Caco-2 (cell line): ENCODE measurements at regions of chr12 and their contacts with region 1.

Region 1: GRCh38 chr12:28998637-28999120 is 150.4 kb upstream of the FAR2 start:
- DNase-seq: peak in 1 of 2 experiments; percentile 30
- H3K4me3 ChIP-seq: no peak overlapping the region
- H3K4me3 Mint-ChIP-seq: no peak overlapping the region
- H3K27ac Mint-ChIP-seq: no peak overlapping the region
- H3K4me1 ChIP-seq: no peaks in the 10 kb centered on the region
- H3K4me1 Mint-ChIP-seq: no peaks in the 10 kb centered on the region
- H3K27me3 ChIP-seq: no peaks in the 10 kb centered on the region
- H3K27me3 Mint-ChIP-seq: no peaks in the 10 kb centered on the region
- CTCF ChIP-seq: peak; percentile 46 to 52

Region 2: DNA sequence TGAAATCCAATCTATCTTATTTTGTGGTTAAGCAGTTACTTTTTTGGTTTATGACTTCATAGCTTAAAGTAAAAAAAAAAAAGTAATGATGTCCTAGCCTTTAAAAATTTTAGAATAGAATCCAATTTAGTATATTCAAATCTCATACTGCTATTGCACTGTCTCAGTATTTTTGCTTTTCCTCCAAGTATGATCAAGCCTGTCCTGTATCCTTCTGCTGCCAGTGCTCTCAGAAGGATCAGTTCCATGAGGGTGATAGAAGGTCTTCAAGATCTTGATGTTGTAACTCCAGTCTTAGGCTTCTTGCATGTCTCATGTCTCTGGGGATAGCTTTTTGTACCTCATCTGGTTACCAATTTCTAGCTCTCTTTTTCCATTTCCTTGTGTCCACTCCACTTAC is 173.8 kb before region 1 on chr12:
- CTCF ChIA-PET with region 1: no interaction called
- POLR2A ChIA-PET with region 1: interaction called, 13 read pairs
- intact Hi-C with region 1: no loop called
- DNase-seq: no peak
- H3K4me3 ChIP-seq: no peak overlapping the region
- H3K4me3 Mint-ChIP-seq: no peak overlapping the region
- H3K27ac Mint-ChIP-seq: no peak overlapping the region
- H3K4me1 ChIP-seq: 0 out of 2 replicates have a peak, but pooled peaks cover 5% of the 10 kb centered on the region
- H3K4me1 Mint-ChIP-seq: peaks cover 9% of the 10 kb centered on the region
- H3K27me3 ChIP-seq: no peaks in the 10 kb centered on the region
- H3K27me3 Mint-ChIP-seq: peaks cover 6% of the 10 kb centered on the region
- CTCF ChIP-seq: no peak

Region 3: GRCh38 chr12:28973491-28973890 is 25.2 kb before region 1 on chr12:
- CTCF ChIA-PET with region 1: no interaction called
- POLR2A ChIA-PET with region 1: no interaction called
- intact Hi-C with region 1: loop called (anchors 2 kb)
- DNase-seq: no peak
- H3K4me3 ChIP-seq: no peak overlapping the region
- H3K4me3 Mint-ChIP-seq: no peak overlapping the region
- H3K27ac Mint-ChIP-seq: no peak overlapping the region
- H3K4me1 ChIP-seq: no peaks in the 10 kb centered on the region
- H3K4me1 Mint-ChIP-seq: no peaks in the 10 kb centered on the region
- H3K27me3 ChIP-seq: no peaks in the 10 kb centered on the region; the same call in 1 of the 2 replicates
- H3K27me3 Mint-ChIP-seq: peaks cover 4% of the 10 kb centered on the region
- CTCF ChIP-seq: no peak